Left colon (tissue), 2 donors: ENCODE measurements at regions of chr1 and their contacts with region 1.

Region 1: DNA sequence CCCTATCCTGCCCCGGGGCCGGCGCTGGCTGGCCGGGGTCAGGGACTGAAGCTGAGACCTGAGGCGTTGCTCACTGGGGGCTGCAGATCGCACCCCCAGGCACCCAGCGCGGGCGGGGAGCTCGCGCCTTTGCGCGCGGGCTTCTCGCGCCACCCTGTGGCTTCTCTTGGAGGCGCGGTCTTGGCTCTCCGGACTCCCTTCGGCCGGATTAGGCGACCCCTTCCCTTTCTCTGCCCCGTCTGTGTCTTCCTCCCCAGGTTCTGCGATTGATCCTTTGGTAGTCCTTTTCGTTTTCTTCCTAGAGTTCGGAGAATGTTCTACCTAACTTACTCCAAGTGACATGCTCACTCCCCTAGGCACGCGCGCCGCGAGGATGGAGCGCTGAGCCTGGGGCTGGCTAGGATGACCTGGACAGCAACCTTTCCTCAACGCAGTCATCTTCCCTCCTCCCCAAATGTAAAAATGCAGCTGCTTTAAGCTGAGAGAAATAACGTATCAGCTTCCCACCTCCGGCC is 495 bp upstream of the NTRK1 start:
- DNase-seq: peak in 1 of 2 donors; percentile 48
- ATAC-seq: peak; percentile 78

Region 2: GRCh38 chr1:156625436-156626078 is 234.6 kb before region 1 on chr1:
- intact Hi-C with region 1: no loop called
- DNase-seq: peak in 1 of 2 donors; percentile 67
- ATAC-seq: peak; percentile 65

Region 3: GRCh38 chr1:156797212-156797871 is 62.8 kb before region 1 on chr1:
- intact Hi-C with region 1: loop called in 1 of 2 experiments (anchors 10 kb)
- DNase-seq: peak in 1 of 2 donors; percentile 55
- ATAC-seq: peak; percentile 86